CD4-positive, alpha-beta memory T cell (primary cell): ENCODE measurements at regions of chr18 and their contacts with region 1.

Region 1: DNA sequence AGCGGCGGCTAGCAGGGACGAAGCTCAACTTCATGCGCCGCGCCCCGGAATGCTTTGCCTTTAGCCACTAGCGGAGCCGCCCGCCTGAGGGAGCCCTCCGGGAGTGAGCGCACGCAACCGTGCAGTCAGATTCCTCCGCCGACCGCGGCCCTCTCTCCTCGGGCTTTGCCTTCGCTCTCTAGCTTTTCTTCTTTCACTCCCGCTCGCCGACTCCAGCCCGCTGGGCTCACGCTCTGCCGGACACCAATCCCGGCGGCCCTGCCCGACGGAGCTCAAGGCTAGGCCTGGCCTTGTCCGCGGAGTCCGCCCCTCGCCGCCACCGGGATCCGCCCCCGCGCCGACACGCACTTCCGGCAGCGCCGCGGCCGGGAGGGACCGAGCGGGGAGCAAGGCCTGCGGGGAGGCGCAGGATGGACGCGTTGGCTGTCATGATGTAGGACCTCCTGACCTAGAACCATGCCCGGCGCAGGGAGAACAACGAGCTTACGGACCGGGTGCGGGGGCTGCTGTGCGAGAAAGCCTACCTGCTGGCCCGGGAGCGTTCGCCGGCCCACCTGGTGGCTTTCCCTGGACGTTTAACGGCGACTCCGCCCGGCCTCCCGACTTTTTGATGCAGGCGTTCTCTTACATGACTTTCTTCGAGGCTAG is 40.8 kb upstream of the AKAIN1 start:
- DNase-seq: peak; percentile 83 to 94 (median 90)
- H3K4me3 ChIP-seq: peak overlapping the region; percentile 73 to 96
- H3K4me3 Mint-ChIP-seq: peak overlapping the region; percentile 89 to 97 (median 95)
- H3K27ac ChIP-seq: peak overlapping the region; percentile 97
- H3K27ac Mint-ChIP-seq: peak overlapping the region; percentile 91 to 99 (median 97)
- H3K4me1 ChIP-seq: peaks cover 44% of the 10 kb centered on the region
- H3K4me1 Mint-ChIP-seq: peaks cover 26 to 60% (median 43%) of the 10 kb centered on the region in 4 donors
- H3K27me3 ChIP-seq: no peaks in the 10 kb centered on the region
- H3K27me3 Mint-ChIP-seq: peaks cover 2% of the 10 kb centered on the region in 2 donors

Region 2: DNA sequence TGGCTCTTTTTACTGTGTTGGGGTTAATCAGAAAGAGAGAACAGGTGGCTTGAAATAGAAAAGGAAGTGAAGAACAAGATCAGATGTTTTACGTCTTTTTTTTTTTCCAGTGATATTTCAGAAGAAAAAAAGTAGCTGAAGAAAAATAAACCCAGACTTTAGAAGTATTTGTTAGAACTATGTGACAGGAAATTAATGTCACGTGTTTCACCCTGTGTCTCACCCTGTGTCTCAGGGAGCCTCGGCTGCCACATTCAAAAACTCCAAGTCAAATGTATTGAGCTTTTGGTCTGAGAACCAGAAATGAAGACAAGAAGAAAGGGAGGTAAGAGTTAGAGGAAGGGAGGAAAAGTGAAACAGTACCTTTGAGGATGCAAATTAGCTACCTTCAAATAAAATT is 78.8 kb before region 1 on chr18:
- CTCF ChIA-PET with region 1: no interaction called
- POLR2A ChIA-PET with region 1: interaction called, 3 read pairs
- intact Hi-C with region 1: loop called (anchors 5 kb)
- DNase-seq: peak in 4 of 5 donors; percentile 11 to 17 (median 12)
- H3K4me3 ChIP-seq: no peak overlapping the region
- H3K4me3 Mint-ChIP-seq: peak overlapping the region in 7 of 8 donors; percentile 29 to 82 (median 66)
- H3K27ac ChIP-seq: no peak overlapping the region
- H3K27ac Mint-ChIP-seq: peak overlapping the region in 6 of 7 donors; percentile 48 to 90 (median 80)
- H3K4me1 ChIP-seq: no peaks in the 10 kb centered on the region
- H3K4me1 Mint-ChIP-seq: peaks cover 15 to 21% (median 17%) of the 10 kb centered on the region in 4 donors
- H3K27me3 ChIP-seq: no peaks in the 10 kb centered on the region
- H3K27me3 Mint-ChIP-seq: no peaks in the 10 kb centered on the region

Region 3: GRCh38 chr18:5250603-5251002 is 12.8 kb after region 1 on chr18:
- CTCF ChIA-PET with region 1: interaction called, 4 read pairs
- POLR2A ChIA-PET with region 1: interaction called, 12 read pairs
- intact Hi-C with region 1: no loop called
- DNase-seq: no peak
- H3K4me3 ChIP-seq: no peak overlapping the region
- H3K4me3 Mint-ChIP-seq: no peak overlapping the region
- H3K27ac ChIP-seq: no peak overlapping the region
- H3K27ac Mint-ChIP-seq: no peak overlapping the region
- H3K4me1 ChIP-seq: no peaks in the 10 kb centered on the region
- H3K4me1 Mint-ChIP-seq: peaks cover 0 to 4% (median 0%) of the 10 kb centered on the region in 4 donors
- H3K27me3 ChIP-seq: no peaks in the 10 kb centered on the region
- H3K27me3 Mint-ChIP-seq: peaks cover 3 to 7% of the 10 kb centered on the region in 2 donors

Region 4: GRCh38 chr18:5295981-5296705 is 58.3 kb after region 1 on chr18:
- CTCF ChIA-PET with region 1: interaction called, 47 read pairs
- POLR2A ChIA-PET with region 1: interaction called, 356 read pairs
- intact Hi-C with region 1: loop called (anchors 1 kb)
- DNase-seq: peak; percentile 94 to 96 (median 95)
- H3K4me3 ChIP-seq: peak overlapping the region; percentile 69 to 77
- H3K4me3 Mint-ChIP-seq: peak overlapping the region; percentile 89 to 98 (median 96)
- H3K27ac ChIP-seq: peak overlapping the region; percentile 84
- H3K27ac Mint-ChIP-seq: peak overlapping the region; percentile 89 to 99 (median 97)
- H3K4me1 ChIP-seq: peaks cover 28% of the 10 kb centered on the region
- H3K4me1 Mint-ChIP-seq: peaks cover 18 to 49% (median 36%) of the 10 kb centered on the region in 4 donors
- H3K27me3 ChIP-seq: no peaks in the 10 kb centered on the region
- H3K27me3 Mint-ChIP-seq: peaks cover 0 to 3% of the 10 kb centered on the region in 2 donors

Region 5: GRCh38 chr18:5309888-5310470 is 72.1 kb after region 1 on chr18:
- CTCF ChIA-PET with region 1: interaction called, 8 read pairs
- POLR2A ChIA-PET with region 1: interaction called, 21 read pairs
- intact Hi-C with region 1: no loop called
- DNase-seq: peak; percentile 42 to 58 (median 53)
- H3K4me3 ChIP-seq: peak overlapping the region; percentile 4 to 51
- H3K4me3 Mint-ChIP-seq: peak overlapping the region; percentile 77 to 94 (median 88)
- H3K27ac ChIP-seq: peak overlapping the region; percentile 29
- H3K27ac Mint-ChIP-seq: peak overlapping the region; percentile 84 to 94 (median 92)
- H3K4me1 ChIP-seq: peaks cover 17% of the 10 kb centered on the region
- H3K4me1 Mint-ChIP-seq: peaks cover 12 to 24% (median 18%) of the 10 kb centered on the region in 4 donors
- H3K27me3 ChIP-seq: no peaks in the 10 kb centered on the region
- H3K27me3 Mint-ChIP-seq: no peaks in the 10 kb centered on the region

Region 6: DNA sequence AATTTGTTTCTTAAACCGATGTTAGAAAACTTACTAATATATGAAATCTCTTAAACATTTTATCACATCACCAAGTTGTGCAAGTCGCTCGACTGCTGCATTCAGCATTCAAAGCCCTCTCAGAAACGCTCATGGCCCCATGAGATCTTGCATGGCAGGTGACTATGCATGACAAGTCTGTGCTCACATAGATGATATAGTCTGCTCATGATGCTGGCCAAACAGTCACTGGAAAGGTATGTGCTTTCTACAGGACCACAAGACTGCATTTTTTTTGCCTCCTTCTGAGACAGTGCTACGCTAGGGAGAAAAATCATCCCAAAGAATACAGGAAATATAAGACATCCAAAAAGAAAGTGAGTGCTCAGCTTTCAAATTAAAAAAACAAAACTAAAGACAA is 155.9 kb after region 1 on chr18:
- CTCF ChIA-PET with region 1: no interaction called
- POLR2A ChIA-PET with region 1: no interaction called
- intact Hi-C with region 1: loop called (anchors 10 kb)
- DNase-seq: no peak
- H3K4me3 ChIP-seq: no peak overlapping the region
- H3K4me3 Mint-ChIP-seq: no peak overlapping the region
- H3K27ac ChIP-seq: no peak overlapping the region
- H3K27ac Mint-ChIP-seq: no peak overlapping the region
- H3K4me1 ChIP-seq: peaks cover 4% of the 10 kb centered on the region
- H3K4me1 Mint-ChIP-seq: peaks cover 0 to 15% (median 7%) of the 10 kb centered on the region in 4 donors
- H3K27me3 ChIP-seq: no peaks in the 10 kb centered on the region
- H3K27me3 Mint-ChIP-seq: peaks cover 3 to 20% of the 10 kb centered on the region in 2 donors

Region 7: DNA sequence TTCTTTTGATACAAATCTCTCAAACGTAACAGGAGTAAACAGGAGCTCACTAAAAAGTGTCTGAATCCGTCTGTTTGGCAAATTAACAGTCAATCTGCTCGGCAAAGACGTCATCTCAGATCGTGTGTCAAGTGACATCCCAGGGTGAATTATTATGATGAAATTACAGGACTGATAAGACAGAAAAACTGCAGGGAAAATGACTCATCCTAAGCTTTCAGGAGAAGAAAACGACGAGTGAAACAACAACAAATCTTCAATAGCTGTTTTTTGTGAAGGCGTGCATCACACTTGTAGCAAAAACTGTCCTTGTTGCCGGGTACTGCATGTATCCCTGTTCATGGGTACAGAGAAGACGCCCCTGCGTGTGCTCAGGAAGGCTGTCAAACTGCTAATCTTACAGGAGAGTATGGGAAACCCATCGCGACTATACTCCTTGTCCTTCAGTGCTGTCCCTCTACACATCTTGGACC is 281.1 kb after region 1 on chr18:
- CTCF ChIA-PET with region 1: no interaction called
- POLR2A ChIA-PET with region 1: no interaction called
- intact Hi-C with region 1: no loop called
- DNase-seq: no peak
- H3K4me3 ChIP-seq: no peak overlapping the region
- H3K4me3 Mint-ChIP-seq: no peak overlapping the region
- H3K27ac ChIP-seq: no peak overlapping the region
- H3K27ac Mint-ChIP-seq: no peak overlapping the region
- H3K4me1 ChIP-seq: no peaks in the 10 kb centered on the region
- H3K4me1 Mint-ChIP-seq: peaks cover 0 to 5% (median 2%) of the 10 kb centered on the region in 4 donors
- H3K27me3 ChIP-seq: no peaks in the 10 kb centered on the region
- H3K27me3 Mint-ChIP-seq: peaks cover 1 to 9% of the 10 kb centered on the region in 2 donors